Calu3 (cell line): ENCODE measurements at regions of chr3 and their contacts with region 1.

Region 1: DNA sequence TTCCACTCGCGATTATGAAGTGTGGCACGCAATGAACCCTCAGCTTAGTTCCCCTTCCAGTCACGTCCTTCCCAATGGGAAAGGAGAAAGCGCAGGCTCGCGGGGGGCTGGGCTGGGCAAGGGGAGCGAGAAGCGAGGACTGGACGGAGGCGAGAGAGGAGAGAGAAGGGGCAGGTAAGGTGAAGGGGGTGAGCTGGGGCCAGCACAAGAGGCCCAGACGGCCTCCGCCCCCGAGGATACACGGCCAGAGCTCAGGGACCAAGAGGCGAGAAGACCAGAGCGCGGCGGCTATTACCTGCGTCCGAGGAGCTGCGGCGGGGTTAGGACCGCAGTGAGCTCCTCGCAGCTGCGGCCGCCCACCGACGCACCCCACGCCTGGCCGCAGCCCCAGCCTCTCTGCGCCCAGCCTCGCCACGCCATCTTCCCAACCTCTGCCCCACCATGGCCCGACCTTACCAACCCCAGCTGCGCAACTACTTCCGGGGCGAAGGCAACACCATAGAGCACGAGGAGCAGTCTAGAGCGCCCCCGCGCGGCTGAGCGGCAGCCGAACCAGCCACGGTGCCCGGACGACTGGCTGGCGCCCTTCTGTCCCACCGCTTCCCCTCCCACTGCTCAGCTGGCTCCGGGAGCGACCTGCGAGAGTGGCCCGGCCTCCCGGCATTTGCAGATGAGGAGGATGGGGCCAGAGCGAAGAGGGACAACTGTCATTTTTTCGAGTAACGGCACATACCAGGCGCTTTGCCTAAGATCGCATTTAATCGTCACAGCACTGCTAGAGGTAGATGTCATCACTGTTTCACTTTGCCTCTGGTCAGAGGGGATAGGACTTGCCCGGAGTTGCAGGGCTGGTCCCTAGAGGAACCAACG is at the start of gene PARL:
- DNase-seq: peak; percentile 100
- H3K4me3 Mint-ChIP-seq: peak within 1 kb of the TSS; percentile 99
- H3K27ac Mint-ChIP-seq: peak within 1 kb of the TSS; percentile 89
- H3K4me1 Mint-ChIP-seq: peaks cover 14% of the 10 kb centered on the region
- H3K27me3 Mint-ChIP-seq: peaks cover 19% of the 10 kb centered on the region
- CTCF ChIP-seq: peak; percentile 97
- total RNA-seq, gene PARL: 80.4 and 84.3 TPM in 2 replicates

Region 2: DNA sequence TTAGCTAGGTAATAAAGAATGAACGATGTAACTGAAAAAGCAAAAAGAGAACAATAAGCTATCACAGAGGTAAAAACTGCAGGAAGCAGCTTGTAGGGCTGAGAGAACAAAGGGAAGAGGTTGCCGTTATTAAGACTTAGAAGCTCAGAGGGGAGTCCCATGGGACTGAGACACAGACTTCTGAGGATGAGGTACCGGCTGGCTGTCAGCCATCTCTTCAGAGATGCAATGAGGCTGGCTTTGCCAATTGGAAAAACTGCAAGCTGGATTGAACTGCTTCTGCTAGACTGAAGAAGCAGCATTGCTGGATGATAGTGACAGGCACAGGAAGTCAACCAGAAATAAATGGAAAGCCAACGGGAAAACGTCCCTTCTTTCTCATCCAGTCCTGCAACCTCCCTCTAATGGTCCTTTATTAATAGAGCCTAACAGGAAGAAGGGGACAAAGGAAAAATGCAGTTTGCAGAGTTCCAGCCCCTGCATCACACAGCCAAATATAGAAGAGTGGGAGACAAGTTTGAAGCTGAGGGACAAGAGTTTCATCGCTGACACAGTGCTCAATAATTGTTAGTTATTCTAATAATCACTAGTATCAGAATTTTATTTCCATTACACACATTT is 308.1 kb before region 1 on chr3:
- CTCF ChIA-PET with region 1: no interaction called
- intact Hi-C with region 1: no loop called
- DNase-seq: no peak
- H3K4me3 Mint-ChIP-seq: no peak overlapping the region
- H3K27ac Mint-ChIP-seq: no peak overlapping the region
- H3K4me1 Mint-ChIP-seq: no peaks in the 10 kb centered on the region
- H3K27me3 Mint-ChIP-seq: peaks cover 59% of the 10 kb centered on the region
- CTCF ChIP-seq: no peak

Region 3: GRCh38 chr3:183825456-183826161 is 59.1 kb before region 1 on chr3 and contains the start of gene MAP6D1:
- CTCF ChIA-PET with region 1: interaction called, 11 read pairs
- intact Hi-C with region 1: no loop called
- DNase-seq: peak; percentile 86
- H3K4me3 Mint-ChIP-seq: peak within 1 kb of the TSS; percentile 86
- H3K27ac Mint-ChIP-seq: peak within 1 kb of the TSS; percentile 56
- H3K4me1 Mint-ChIP-seq: peaks cover 11% of the 10 kb centered on the region
- H3K27me3 Mint-ChIP-seq: no peaks in the 10 kb centered on the region
- CTCF ChIP-seq: peak; percentile 44
- total RNA-seq, gene MAP6D1: 5.4 and 6.5 TPM in 2 replicates

Region 4: DNA sequence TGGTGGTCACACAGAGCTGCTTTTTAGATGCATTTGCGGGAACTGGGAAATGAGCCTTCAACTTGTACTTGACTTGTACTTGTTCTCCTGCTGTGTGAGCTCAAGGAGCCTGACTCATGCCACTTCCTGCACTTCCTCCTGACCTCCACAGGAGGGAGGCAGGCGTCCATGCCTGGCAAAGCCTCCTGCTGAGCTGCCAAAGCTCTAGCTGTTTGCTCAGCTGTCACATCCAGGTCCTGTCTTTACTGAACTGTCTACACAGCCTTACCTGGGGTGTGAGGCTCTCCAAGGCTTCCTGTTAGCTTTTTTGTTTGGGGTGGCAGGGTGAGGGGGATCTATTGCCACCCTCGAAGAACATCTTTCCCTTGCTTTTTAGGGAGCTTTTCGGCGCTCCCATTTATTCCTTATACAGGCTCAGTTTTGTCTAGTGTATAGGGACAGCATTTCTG is 486.9 kb after region 1 on chr3:
- CTCF ChIA-PET with region 1: no interaction called
- intact Hi-C with region 1: no loop called
- DNase-seq: peak; percentile 91
- H3K4me3 Mint-ChIP-seq: no peak overlapping the region
- H3K27ac Mint-ChIP-seq: peak overlapping the region; percentile 58
- H3K4me1 Mint-ChIP-seq: peaks cover 7% of the 10 kb centered on the region
- H3K27me3 Mint-ChIP-seq: peaks cover 48% of the 10 kb centered on the region
- CTCF ChIP-seq: peak; percentile 99